Dorsolateral prefrontal cortex (tissue), 120 donors: ENCODE measurements at regions of chr4 and their contacts with region 1.

Region 1: GRCh38 chr4:158624889-158625478 is 46.7 kb downstream of the C4orf46 start:
- DNase-seq: no peak
- H3K4me3 ChIP-seq: peak overlapping the region in 1 of 59 donors; percentile 21
- H3K27ac ChIP-seq: peak overlapping the region in 29 of 59 donors; percentile 2 to 63 (median 37)
- H3K27me3 ChIP-seq: no peaks in the 10 kb centered on the region
- CTCF ChIP-seq: peak; percentile 56 to 83 (median 71)

Region 2: GRCh38 chr4:158172261-158173258 is 452.4 kb before region 1 on chr4 and contains the start of gene GASK1B:
- intact Hi-C with region 1: loop called in 1 of 2 experiments (anchors 10 kb)
- DNase-seq: peak in 2 of 10 donors; percentile 33 to 61
- H3K4me3 ChIP-seq: peak within 1 kb of the TSS; percentile 30 to 70 (median 53)
- H3K27ac ChIP-seq: peak within 1 kb of the TSS in 57 of 59 donors; percentile 6 to 88 (median 76)
- H3K27me3 ChIP-seq: no peaks in the 10 kb centered on the region
- CTCF ChIP-seq: peak; percentile 57 to 94 (median 77)
- total RNA-seq, gene GASK1B: 23.9 to 74.1 (median 43.0) TPM

Region 3: DNA sequence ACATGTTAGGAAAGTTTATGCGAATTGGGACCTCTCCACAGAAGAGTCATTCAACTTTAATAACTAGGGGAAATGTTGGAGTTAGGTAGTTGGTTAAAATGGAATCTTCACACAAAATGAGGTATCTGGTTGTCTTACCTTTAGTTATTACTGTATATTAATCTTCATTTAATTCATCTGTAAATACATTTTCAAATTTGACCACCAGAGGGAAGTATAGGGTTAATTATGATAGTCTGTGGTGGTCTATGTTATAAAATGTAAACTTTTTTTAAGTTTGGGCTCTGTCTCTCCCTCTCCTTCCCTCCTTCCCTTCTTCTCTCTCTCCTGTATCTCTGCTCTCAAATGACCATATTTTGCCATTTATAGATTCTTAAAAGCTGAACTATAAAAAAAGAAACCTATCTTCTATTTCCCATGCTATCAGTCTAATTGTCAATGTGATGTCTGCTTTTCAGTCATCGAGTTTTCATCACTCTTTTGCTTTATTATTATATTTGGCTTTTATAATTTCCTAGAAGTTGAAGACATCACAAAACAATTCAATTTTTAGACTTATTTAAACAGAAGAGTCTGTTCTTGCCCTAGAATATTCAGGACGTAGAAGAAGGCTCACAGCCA is 364.9 kb before region 1 on chr4:
- intact Hi-C with region 1: loop called in 1 of 2 experiments (anchors 10 kb)
- DNase-seq: no peak
- H3K4me3 ChIP-seq: peak overlapping the region in 4 of 59 donors; percentile 3 to 18 (median 10)
- H3K27ac ChIP-seq: peak overlapping the region in 53 of 59 donors; percentile 3 to 88 (median 73)
- H3K27me3 ChIP-seq: no peaks in the 10 kb centered on the region
- CTCF ChIP-seq: peak in 52 of 56 donors; percentile 27 to 62 (median 46)

Region 4: GRCh38 chr4:158484173-158484885 is 140.7 kb before region 1 on chr4:
- intact Hi-C with region 1: no loop called
- DNase-seq: no peak
- H3K4me3 ChIP-seq: no peak overlapping the region
- H3K27ac ChIP-seq: no peak overlapping the region
- H3K27me3 ChIP-seq: no peaks in the 10 kb centered on the region
- CTCF ChIP-seq: no peak